WTC11 (cell line): ENCODE measurements at regions of chr2 and their contacts with region 1.

Region 1: DNA sequence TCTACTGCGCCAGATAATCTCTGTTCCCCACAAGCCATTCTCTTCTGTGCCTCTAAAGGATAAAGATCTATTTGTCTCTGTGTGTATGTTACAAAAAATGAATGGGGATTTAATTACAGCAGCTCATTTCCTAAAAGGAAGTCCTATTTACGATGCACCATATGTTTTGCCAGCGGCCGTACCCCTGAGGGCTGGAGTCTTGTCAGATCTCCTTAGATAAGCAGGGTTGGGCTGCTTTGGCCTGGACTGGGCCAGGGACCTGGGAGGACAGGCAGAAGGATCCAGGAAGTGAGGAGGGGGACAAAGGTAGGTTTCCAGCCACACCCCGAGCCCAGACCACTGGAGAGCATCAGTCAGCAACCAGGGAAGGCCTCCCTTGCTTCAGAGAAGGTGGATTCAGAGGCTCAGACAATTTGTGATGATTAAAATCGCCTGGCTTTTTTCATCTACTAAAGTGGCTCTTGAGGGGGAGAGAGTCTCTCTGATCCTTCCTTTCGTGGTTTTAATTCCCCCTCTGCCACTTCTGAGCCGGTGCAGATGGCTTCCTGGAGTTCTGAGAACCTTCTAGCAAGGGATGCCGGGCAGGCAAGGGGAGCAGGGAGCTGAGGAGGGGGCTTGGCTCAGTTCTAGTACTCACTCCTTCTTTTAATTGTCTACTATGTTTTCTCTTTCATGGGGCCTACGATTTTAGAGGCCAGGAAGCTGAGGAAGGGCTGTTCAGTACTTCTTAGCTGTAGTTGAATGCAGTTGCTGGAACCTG is 42.1 kb downstream of the MYCN start:
- DNase-seq: no peak
- ATAC-seq: no peak
- H3K4me3 Mint-ChIP-seq: no peak overlapping the region
- H3K27ac Mint-ChIP-seq: peak overlapping the region; percentile 84
- H3K4me1 Mint-ChIP-seq: peaks cover 55% of the 10 kb centered on the region
- H3K27me3 Mint-ChIP-seq: no peaks in the 10 kb centered on the region
- CTCF ChIP-seq: no peak

Region 2: DNA sequence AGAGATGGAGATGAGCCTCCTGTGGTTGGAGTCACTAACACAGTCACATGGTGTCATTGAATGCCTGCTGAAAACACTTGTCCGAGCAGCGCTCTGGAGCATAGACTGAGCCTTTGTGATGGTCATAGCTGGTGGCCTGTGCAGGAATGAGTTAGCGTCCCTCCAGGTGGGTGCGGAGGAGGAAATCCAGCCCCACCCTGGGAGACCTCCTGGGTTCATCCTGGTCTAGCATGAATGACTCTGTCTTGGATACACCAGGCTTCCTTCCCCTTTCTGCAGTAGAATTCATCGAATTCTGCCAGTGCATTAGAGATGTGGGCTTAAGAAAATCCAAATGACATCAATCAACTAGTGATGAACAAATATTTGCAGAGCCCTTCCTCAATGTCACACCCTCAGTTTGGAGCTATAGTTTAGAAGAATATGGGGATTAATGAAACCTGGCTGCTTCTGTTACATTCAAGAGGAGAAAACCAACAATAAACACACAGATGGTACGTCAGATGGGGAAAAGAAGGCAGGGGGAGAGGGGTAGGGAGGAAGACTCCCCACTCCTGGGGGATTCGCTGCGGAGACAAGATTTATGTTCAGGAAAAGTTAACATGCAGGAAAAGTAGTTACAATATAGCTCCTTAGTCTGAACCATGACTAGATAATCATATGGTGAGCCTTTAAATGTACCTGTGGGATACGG is 254.1 kb before region 1 on chr2:
- CTCF ChIA-PET with region 1: no interaction called
- POLR2A ChIA-PET with region 1: no interaction called
- DNase-seq: no peak
- ATAC-seq: no peak; the same call in 1 of the 2 replicates
- H3K4me3 Mint-ChIP-seq: no peak overlapping the region
- H3K27ac Mint-ChIP-seq: no peak overlapping the region
- H3K4me1 Mint-ChIP-seq: 0 out of 2 replicates have a peak, but pooled peaks cover 3% of the 10 kb centered on the region
- H3K27me3 Mint-ChIP-seq: no peaks in the 10 kb centered on the region
- CTCF ChIP-seq: no peak

Region 3: DNA sequence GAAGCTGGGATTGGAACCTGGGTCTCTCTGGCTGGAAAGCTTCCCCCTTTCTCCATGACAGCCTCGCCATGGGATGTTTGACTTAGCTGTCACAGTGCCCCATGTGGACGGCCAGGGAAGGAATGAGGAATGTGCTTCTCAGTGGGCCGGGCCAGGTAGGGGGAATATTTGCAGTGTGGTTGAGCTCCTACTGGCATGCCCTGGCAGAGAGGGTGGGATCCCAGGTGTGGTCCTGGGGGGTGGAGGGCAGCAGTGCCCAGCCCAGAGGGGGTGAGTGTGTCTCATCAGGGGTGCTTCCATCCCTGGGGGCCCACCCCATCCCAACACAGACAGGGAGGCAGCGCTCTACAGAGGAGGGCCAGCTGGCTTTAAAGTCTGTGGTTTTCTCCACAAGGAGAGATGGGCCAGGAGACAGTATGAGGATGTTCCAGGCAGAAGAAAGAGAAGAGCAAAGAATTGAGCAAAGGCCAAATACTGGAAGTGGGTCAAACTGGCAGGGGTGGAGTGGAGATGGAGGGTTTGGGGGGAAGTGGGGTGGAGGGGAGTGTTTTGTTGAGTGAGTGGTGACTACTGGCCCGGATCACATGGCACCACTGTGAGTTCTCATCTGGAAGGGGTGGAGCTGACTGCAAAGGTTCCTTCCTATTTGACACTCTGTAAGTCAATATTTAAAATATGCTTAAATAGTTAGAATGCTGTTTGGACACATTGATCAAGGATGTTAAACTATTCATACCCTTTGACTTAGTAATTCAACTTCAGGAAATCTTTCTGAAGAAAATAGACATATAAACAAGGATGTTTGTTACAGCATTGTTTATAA is 51.9 kb after region 1 on chr2:
- CTCF ChIA-PET with region 1: interaction called, 11 read pairs
- POLR2A ChIA-PET with region 1: no interaction called
- DNase-seq: peak; percentile 75
- ATAC-seq: peak; percentile 93
- H3K4me3 Mint-ChIP-seq: no peak overlapping the region
- H3K27ac Mint-ChIP-seq: no peak overlapping the region
- H3K4me1 Mint-ChIP-seq: peaks cover 51% of the 10 kb centered on the region
- H3K27me3 Mint-ChIP-seq: peaks cover 2% of the 10 kb centered on the region; the same call in 1 of the 2 replicates
- CTCF ChIP-seq: peak; percentile 58